Transverse colon (tissue), 4 donors: ENCODE measurements at regions of chr1 and their contacts with region 1.

Region 1: DNA sequence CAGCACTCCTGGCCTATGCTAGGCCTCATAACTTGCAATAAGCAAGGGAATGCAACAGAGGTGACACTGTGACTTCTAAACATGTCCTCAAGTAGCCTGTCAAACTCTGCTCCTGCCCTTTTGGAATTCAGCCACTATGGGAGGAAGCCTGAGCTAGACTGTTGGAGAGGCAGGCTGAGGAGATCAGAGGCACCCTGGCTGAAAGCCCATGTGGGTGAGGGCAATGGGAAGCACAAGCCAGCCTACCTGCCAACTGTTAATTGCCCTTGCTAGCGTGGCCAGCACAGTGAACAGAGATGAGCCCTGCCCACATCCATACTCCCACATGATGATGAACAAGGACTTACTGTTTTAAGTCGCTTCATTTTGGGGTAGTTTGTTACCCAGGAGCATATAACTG is 17.7 kb downstream of the GNB1 start:
- DNase-seq: peak; percentile 77
- H3K4me3 ChIP-seq: no peak overlapping the region
- H3K27ac ChIP-seq: peak overlapping the region in 2 of 4 donors; percentile 29 to 30
- H3K4me1 ChIP-seq: peaks cover 14 to 80% (median 27%) of the 10 kb centered on the region in 4 donors
- H3K27me3 ChIP-seq: no peaks in the 10 kb centered on the region
- CTCF ChIP-seq: no peak
- EP300 ChIP-seq: no peak
- POLR2A ChIP-seq: no peak

Region 2: GRCh38 chr1:1545946-1546737 is 327.0 kb before region 1 on chr1:
- in situ Hi-C with region 1: no loop called
- intact Hi-C with region 1: loop called (anchors 2 kb)
- DNase-seq: no peak
- H3K4me3 ChIP-seq: no peak overlapping the region
- H3K27ac ChIP-seq: no peak overlapping the region
- H3K4me1 ChIP-seq: peaks cover 0 to under 1% (median under 1%) of the 10 kb centered on the region in 4 donors
- H3K27me3 ChIP-seq: no peaks in the 10 kb centered on the region
- CTCF ChIP-seq: no peak
- EP300 ChIP-seq: no peak
- POLR2A ChIP-seq: no peak